Activated T-helper 2 cell treated with anti-CD3 and anti-CD28 coated beads, Interferon-gamma antibody, Interleukin-2, Interleukin-4, amounts not matched to agents 10 μg/mL and 5 μg/mL and 100 μg/mL, durations not matched to agents 14 hours and 24 hours and 36 hours (primary cell): ENCODE measurements at regions of chr1 and their contacts with region 1.

Region 1: GRCh38 chr1:229661022-229661877 is 35.2 kb downstream of the URB2 start:
- DNase-seq: peak; percentile 41
- H3K4me3 Mint-ChIP-seq: no peak overlapping the region
- H3K27ac Mint-ChIP-seq: no peak overlapping the region
- H3K4me1 Mint-ChIP-seq: peaks cover 10% of the 10 kb centered on the region
- H3K27me3 Mint-ChIP-seq: peaks cover 2% of the 10 kb centered on the region

Region 2: GRCh38 chr1:229470406-229471043 is 190.7 kb before region 1 on chr1:
- intact Hi-C with region 1: no loop called
- DNase-seq: no peak
- H3K4me3 Mint-ChIP-seq: no peak overlapping the region
- H3K27ac Mint-ChIP-seq: no peak overlapping the region
- H3K4me1 Mint-ChIP-seq: no peaks in the 10 kb centered on the region
- H3K27me3 Mint-ChIP-seq: no peaks in the 10 kb centered on the region

Region 3: GRCh38 chr1:229694053-229694693 is 32.9 kb after region 1 on chr1:
- intact Hi-C with region 1: no loop called
- DNase-seq: no peak
- H3K4me3 Mint-ChIP-seq: no peak overlapping the region
- H3K27ac Mint-ChIP-seq: no peak overlapping the region
- H3K4me1 Mint-ChIP-seq: peaks cover 14% of the 10 kb centered on the region
- H3K27me3 Mint-ChIP-seq: peaks cover 7% of the 10 kb centered on the region

Region 4: GRCh38 chr1:229759038-229759436 is 97.8 kb after region 1 on chr1:
- intact Hi-C with region 1: loop called (anchors 2 kb)
- DNase-seq: no peak
- H3K4me3 Mint-ChIP-seq: no peak overlapping the region
- H3K27ac Mint-ChIP-seq: no peak overlapping the region
- H3K4me1 Mint-ChIP-seq: peaks cover 21% of the 10 kb centered on the region
- H3K27me3 Mint-ChIP-seq: peaks cover 14% of the 10 kb centered on the region

Region 5: GRCh38 chr1:229848752-229849677 is 187.8 kb after region 1 on chr1:
- intact Hi-C with region 1: loop called (anchors 10 kb)
- DNase-seq: no peak
- H3K4me3 Mint-ChIP-seq: no peak overlapping the region
- H3K27ac Mint-ChIP-seq: no peak overlapping the region
- H3K4me1 Mint-ChIP-seq: no peaks in the 10 kb centered on the region
- H3K27me3 Mint-ChIP-seq: peaks cover 12% of the 10 kb centered on the region

Region 6: GRCh38 chr1:230310381-230311163 is 649.3 kb after region 1 on chr1:
- intact Hi-C with region 1: loop called (anchors 1 kb)
- DNase-seq: peak; percentile 34
- H3K4me3 Mint-ChIP-seq: no peak overlapping the region
- H3K27ac Mint-ChIP-seq: no peak overlapping the region
- H3K4me1 Mint-ChIP-seq: peaks cover 11% of the 10 kb centered on the region
- H3K27me3 Mint-ChIP-seq: peaks cover 3% of the 10 kb centered on the region